H1 (cell line): ENCODE measurements at regions of chr19 and their contacts with region 1.

Region 1: DNA sequence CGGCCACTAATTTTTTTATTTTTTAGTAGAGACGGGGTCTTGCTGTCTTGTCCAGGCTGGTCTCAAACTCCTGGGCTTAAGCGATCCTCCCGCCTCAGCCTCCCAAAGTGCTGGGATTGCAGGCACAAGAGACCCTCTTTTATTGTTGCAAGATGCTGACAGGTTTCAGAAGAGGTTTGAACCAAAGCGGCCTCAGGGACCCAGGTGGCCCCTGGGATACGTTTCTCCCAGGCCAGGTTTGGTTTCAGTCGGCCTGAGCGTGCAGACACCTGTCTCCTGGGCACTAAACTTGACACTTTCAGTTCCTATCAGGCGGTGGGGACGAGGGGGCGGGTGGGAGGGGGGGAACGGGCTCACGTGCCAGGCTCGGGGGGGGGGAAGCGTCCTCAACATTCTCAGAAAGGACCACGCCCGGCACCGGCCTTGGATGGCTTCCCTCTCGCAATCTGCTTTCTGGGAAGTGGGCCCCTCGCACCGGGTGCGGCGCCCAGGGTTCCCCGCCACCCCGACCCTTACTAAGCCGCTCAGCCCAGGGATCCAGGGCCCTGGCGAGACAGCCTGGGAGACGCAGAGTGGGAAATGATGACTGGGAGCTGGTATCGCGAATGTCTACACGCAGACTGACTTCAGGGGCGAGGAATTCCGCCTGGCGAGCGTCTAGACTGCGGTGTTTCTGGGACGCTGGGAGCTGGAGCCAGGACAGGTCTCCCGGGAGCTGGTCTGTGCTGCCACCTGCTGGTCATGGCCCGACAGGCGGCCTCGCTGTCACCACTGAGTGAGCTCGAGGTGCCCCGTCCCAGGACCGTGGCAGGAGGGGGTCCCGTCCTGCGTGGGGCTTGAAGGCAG is 91.6 kb downstream of the GNG7 start:
- DNase-seq: peak; percentile 80 to 98
- H3K4me3 ChIP-seq: peak overlapping the region in 3 of 4 experiments; percentile 32 to 55 (median 37); a peak in 6 of 8 replicates
- H3K27ac ChIP-seq: no peak overlapping the region
- H3K4me1 ChIP-seq: peaks cover 0 to 5% (median under 1%) of the 10 kb centered on the region in 4 experiments; a peak in 2 of 7 replicates
- H3K27me3 ChIP-seq: peaks cover 0 to 9% (median 2%) of the 10 kb centered on the region in 4 experiments; a peak in 1 of 7 replicates
- CTCF ChIP-seq: peak; percentile 90 to 98 (median 96)
- EP300 ChIP-seq: 0 out of 3 replicates have a peak, but pooled peaks of 1 of the 2 experiments have one; percentile 10
- POLR2A ChIP-seq: no peak
- RAD21 ChIP-seq: peak; percentile 98 to 99

Region 2: DNA sequence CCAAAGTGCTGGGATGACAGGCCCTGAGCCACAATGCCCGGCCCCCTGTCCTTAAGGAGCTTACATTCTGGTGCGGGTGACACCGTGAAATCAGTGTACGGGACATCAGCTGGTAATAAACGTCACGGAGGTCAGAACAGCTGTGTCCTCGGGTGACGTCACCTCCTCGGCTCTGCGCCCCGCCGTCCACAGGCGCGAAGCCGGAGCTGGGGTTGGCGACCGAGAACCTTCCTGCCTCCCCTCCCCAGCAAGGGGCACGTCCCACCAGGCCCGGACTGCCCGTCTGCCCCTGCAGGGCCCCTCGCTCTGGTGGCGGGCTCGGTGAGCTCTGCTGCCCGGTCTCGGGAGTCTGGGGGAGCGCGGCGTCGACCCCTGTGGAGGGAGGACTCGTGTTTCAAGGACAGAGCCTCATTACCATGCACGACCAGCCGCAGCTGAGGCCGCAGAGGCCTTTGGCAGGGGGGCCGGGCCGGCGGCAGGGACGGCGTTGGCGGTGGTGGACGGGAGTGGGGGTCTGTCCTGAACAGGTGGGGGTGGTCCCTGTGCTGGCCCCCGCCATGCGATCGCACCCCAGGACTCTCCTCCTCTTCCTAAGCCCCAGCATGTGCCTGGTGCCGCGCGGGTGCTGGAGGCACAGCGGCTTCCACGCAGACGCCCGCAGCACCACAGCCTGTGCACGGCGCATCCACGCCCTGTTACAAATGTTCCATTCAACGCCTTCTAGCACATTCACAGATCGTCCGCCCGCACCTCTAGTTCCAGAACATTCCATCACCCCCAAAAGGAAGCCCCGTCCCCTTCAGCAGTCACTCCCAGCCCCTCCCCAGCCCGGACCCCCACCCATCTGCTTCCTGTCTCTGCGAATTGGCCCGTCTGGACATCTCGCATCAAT is 308.3 kb before region 1 on chr19:
- CTCF ChIA-PET with region 1: no interaction called
- POLR2A ChIA-PET with region 1: no interaction called
- DNase-seq: peak in 1 of 2 experiments; percentile 79
- H3K4me3 ChIP-seq: peak overlapping the region in 3 of 4 experiments; percentile 29 to 54 (median 32); a peak in 5 of 8 replicates
- H3K27ac ChIP-seq: no peak overlapping the region
- H3K4me1 ChIP-seq: peaks cover 0 to 12% (median 8%) of the 10 kb centered on the region in 4 experiments; a peak in 5 of 7 replicates
- H3K27me3 ChIP-seq: peaks cover 0 to 30% (median 19%) of the 10 kb centered on the region in 4 experiments; a peak in 6 of 7 replicates
- CTCF ChIP-seq: no peak
- EP300 ChIP-seq: no peak
- POLR2A ChIP-seq: no peak
- RAD21 ChIP-seq: no peak

Region 3: DNA sequence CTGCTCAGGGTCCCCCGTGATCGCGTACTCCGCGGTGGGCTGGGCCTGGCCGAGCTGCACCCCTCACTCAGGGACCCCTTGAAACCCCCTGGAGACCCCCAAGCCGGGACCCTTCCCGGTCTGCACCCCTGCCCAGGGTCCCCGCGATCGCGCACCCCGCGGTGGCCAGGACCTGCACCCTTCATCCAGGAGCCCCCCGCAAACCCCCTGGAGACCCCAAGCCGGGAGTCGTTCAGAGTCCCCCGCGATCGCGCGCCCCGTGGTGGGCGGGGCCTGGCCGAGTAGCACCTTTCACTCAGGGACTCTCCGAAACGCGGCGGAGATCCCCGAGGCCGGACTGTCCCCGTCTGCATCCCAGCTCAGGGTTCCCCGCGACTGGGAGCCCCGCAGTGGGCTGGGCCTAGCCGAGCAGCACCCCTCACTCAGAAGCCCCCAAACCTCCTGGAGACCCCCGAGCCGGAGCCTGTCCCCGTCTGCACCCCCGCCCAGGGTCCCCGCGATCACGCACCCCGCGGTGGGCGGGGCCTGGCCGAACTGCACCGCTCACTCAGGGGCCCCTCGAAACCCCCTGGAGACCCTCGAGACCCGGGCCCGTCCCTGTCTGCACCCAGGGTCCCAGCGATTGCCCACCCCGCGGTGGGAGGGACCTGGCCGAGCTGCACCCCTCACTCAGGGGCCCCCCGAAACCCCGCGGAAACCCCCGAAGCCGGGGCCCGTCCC is 154.8 kb before region 1 on chr19:
- CTCF ChIA-PET with region 1: interaction called, 15 read pairs
- POLR2A ChIA-PET with region 1: interaction called, 3 read pairs
- DNase-seq: no peak
- H3K4me3 ChIP-seq: peak overlapping the region; percentile 83 to 100 (median 85)
- H3K27ac ChIP-seq: no peak overlapping the region; the same call in 1 of the 2 replicates
- H3K4me1 ChIP-seq: peaks cover 0 to 5% (median 3%) of the 10 kb centered on the region in 4 experiments; a peak in 5 of 7 replicates
- H3K27me3 ChIP-seq: no peaks in the 10 kb centered on the region
- CTCF ChIP-seq: no peak
- EP300 ChIP-seq: no peak
- POLR2A ChIP-seq: 0 out of 3 replicates have a peak, but pooled peaks of 1 of the 2 experiments have one; percentile 3
- RAD21 ChIP-seq: no peak

Region 4: DNA sequence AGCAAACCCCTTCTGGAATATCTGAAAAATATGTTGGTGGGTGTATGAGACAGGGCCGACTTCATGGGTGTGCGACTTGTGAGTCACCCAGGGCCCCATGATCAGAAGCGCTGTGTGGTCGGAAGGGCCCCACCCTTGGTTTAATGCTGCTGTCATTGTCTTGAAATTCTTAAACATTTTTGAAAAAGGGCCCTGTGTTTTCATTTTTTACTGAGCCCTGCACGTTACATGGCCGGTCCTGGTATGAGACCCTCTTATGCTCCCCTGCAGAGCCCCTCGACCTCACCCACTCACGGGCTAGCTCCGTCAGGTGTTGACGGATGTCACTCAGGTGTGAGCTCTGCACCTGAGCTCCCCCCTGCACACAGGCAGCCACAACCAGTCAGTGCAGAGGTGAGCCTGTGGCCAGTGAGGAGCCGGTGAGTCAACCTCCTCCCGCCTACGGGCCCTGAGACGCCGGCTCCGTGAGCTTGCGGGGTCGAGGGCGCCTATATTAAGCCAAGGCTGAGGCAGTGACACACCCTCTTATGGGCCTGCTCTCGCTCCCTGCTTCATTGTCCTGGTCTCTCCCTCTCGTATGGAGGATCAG is 107.2 kb before region 1 on chr19:
- CTCF ChIA-PET with region 1: interaction called, 11 read pairs
- POLR2A ChIA-PET with region 1: no interaction called
- DNase-seq: no peak
- H3K4me3 ChIP-seq: no peak overlapping the region
- H3K27ac ChIP-seq: no peak overlapping the region
- H3K4me1 ChIP-seq: peaks cover 0 to 4% (median 2%) of the 10 kb centered on the region in 4 experiments; a peak in 4 of 7 replicates
- H3K27me3 ChIP-seq: no peaks in the 10 kb centered on the region
- CTCF ChIP-seq: no peak
- EP300 ChIP-seq: no peak
- POLR2A ChIP-seq: no peak
- RAD21 ChIP-seq: no peak

Region 5: GRCh38 chr19:2543463-2544442 is 67.1 kb before region 1 on chr19:
- CTCF ChIA-PET with region 1: interaction called, 10 read pairs
- POLR2A ChIA-PET with region 1: interaction called, 4 read pairs
- DNase-seq: peak; percentile 81 to 84
- H3K4me3 ChIP-seq: no peak overlapping the region; a peak in 1 of 8 replicates
- H3K27ac ChIP-seq: peak overlapping the region; percentile 40; the same call in 1 of the 2 replicates
- H3K4me1 ChIP-seq: peaks cover 3 to 26% (median 20%) of the 10 kb centered on the region in 4 experiments
- H3K27me3 ChIP-seq: no peaks in the 10 kb centered on the region; a peak in 2 of 7 replicates
- CTCF ChIP-seq: peak in 2 of 3 experiments; percentile 19 to 28; a peak in 2 of 4 replicates
- EP300 ChIP-seq: peak in 1 of 2 experiments; percentile 35; a peak in 1 of 3 replicates
- POLR2A ChIP-seq: peak in 1 of 2 experiments; percentile 81; a peak in 2 of 3 replicates
- RAD21 ChIP-seq: peak; percentile 27 to 53

Region 6: GRCh38 chr19:2552859-2553258 is 58.0 kb before region 1 on chr19:
- CTCF ChIA-PET with region 1: interaction called, 12 read pairs
- POLR2A ChIA-PET with region 1: no interaction called
- DNase-seq: no peak
- H3K4me3 ChIP-seq: no peak overlapping the region
- H3K27ac ChIP-seq: no peak overlapping the region
- H3K4me1 ChIP-seq: peaks cover 0 to 10% (median 0%) of the 10 kb centered on the region in 4 experiments; a peak in 1 of 7 replicates
- H3K27me3 ChIP-seq: no peaks in the 10 kb centered on the region
- CTCF ChIP-seq: no peak
- EP300 ChIP-seq: no peak
- POLR2A ChIP-seq: no peak
- RAD21 ChIP-seq: no peak

Region 7: DNA sequence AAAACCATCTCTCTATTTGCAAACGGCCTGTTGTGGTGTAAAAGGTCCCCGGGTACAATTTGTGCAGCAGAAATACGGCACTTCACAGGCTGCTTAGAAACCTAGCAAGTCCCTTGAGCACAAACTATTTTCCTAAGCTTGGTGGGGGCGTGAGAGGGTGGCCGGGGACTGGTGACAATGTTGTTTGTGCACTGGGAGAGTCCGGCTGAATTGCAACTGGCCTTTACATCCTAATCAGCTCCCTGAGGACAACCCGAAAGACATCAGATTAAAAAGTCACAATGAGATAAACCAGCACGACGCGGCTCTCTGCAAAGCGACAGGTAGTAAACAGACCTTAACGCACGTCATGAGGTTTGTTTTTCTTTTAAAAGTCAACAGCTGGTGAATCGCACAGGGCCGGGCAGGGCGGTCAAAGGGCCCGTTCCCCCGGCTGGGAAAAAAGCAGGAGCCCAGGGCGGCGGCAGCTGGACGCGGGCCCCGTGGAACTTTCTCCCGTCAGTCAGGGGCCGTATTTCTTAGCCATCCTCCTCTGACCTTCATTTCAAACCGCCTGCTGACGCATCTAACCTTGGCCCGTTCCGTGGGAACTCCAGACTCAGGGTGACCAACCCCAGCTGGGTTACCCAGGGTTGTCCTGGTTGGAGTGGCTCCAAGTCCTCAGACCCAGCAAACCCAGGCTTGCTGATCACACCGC is 22.6 kb before region 1 on chr19:
- CTCF ChIA-PET with region 1: interaction called, 17 read pairs
- POLR2A ChIA-PET with region 1: interaction called, 3 read pairs
- DNase-seq: no peak
- H3K4me3 ChIP-seq: no peak overlapping the region
- H3K27ac ChIP-seq: no peak overlapping the region
- H3K4me1 ChIP-seq: peaks cover 3 to 16% (median 7%) of the 10 kb centered on the region in 4 experiments
- H3K27me3 ChIP-seq: peaks cover 0 to 3% (median 0%) of the 10 kb centered on the region in 4 experiments; a peak in 1 of 7 replicates
- CTCF ChIP-seq: no peak
- EP300 ChIP-seq: no peak
- POLR2A ChIP-seq: no peak
- RAD21 ChIP-seq: no peak

Region 8: DNA sequence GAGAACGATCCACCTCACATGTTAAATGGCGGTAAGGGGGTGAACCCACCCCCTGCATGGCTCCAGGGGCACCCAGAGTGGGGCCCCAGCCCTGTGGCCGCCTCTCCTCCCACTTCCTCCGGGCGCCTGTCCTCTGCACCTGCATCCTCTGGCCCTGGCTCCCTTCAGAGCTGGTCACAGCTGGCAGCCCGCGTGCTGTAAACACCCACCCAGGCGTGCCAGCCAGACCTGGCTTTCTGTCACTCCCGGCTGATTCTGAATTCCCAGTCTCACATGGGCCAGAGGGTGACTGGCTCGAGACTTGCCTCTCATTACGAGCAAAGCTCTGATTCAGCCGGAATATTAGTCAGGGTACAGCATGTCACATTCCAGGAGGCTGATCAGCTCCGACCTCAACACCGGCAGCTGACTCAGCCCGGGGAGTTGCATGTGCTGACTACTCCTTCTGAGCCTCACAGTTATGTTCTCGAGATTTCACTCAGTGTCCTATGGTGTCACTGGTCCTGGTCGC is 16.5 kb after region 1 on chr19:
- CTCF ChIA-PET with region 1: interaction called, 17 read pairs
- POLR2A ChIA-PET with region 1: interaction called, 6 read pairs
- DNase-seq: no peak
- H3K4me3 ChIP-seq: no peak overlapping the region
- H3K27ac ChIP-seq: no peak overlapping the region
- H3K4me1 ChIP-seq: peaks cover 0 to 4% (median under 1%) of the 10 kb centered on the region in 4 experiments; a peak in 2 of 7 replicates
- H3K27me3 ChIP-seq: no peaks in the 10 kb centered on the region
- CTCF ChIP-seq: no peak
- EP300 ChIP-seq: no peak
- POLR2A ChIP-seq: no peak
- RAD21 ChIP-seq: no peak

Region 9: DNA sequence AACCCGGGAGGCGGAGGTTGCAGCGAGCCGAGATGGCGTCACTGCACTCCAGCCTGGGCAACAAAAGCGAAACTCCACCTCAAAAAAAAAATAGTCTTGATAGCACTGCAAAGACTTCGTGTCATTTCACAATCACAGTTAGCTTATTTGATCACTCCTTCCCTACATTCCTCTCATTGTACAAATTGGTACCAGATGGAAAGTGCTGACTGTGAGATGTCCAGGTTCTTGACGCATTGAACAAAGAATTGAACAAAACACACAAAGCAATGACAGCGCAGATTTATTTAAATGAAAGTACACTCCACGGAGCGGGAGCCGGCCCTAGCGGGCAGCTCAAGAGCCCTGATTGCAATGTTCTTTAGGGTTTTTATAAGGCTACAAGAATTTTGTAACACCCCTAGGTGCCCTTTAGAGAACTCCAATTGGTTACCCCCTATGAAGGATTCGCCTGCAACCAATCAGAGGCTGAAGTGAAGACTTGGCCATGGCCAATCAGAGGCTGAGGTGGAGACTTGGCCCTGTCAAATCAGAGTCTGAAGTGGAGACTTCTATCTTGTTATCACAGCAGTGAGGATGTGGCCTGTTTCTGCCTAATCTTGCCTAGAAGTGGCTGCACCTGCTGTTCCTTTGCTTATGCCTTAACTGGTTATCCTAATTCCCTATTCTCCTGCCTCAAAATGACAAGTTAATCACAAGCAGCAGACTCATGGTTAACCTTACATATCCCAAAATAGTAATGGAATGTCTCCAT is 273.0 kb after region 1 on chr19:
- CTCF ChIA-PET with region 1: no interaction called
- POLR2A ChIA-PET with region 1: no interaction called
- DNase-seq: no peak
- H3K4me3 ChIP-seq: no peak overlapping the region
- H3K27ac ChIP-seq: no peak overlapping the region
- H3K4me1 ChIP-seq: no peaks in the 10 kb centered on the region
- H3K27me3 ChIP-seq: no peaks in the 10 kb centered on the region
- CTCF ChIP-seq: no peak
- EP300 ChIP-seq: no peak
- POLR2A ChIP-seq: no peak
- RAD21 ChIP-seq: no peak